Dendritic cell treated with granulocyte-macrophage colony-stimulating factor and Interleukin-4, amounts not matched to agents 40 ng/mL and 50 ng/mL, for 4 days (primary cell): ENCODE measurements at regions of chr4 and their contacts with region 1.

Region 1: DNA sequence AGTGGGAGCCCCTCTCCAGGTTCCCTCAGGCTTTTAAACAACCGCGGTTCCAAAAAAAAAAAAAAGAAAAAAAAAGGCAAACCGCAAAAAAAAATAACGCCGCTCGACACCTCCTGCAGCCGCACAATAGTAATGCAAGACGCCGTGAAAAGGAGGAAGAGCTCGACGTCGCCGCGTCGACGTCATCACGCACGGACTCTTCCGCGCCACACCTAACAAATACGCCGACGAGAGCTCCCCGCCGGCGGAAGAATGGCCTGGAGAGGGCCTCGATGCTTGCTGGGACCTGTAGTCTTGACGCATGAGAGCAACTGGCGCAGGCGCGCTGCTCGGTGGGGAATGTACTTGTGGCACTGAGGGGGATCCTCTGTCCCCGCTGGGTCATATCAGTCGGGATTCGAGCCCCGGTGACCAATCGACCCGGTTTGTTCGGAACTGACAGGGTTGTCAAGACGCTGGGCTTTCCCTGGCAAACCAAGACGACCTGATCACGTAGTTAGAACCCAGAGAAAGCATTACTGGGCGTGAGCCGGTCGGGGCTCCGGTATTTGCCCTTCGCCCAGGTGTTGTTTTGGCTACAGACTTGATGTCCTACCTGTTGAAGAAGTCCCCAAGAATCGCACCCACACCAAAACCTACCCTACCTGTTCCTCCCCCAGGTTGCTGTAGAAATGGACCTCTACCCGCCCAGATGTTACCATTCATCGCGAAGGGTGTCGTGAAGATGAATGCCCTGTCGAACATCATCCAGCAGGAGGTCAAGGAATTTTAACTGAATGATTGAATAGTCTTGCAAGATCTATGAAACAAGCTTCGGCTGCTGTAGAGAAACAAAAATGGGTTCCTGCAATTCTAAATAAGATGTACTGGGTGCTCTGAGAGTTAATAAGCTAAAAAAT is at the start of gene CBR4:
- H3K4me3 Mint-ChIP-seq: peak within 1 kb of the TSS; percentile 90
- H3K27ac Mint-ChIP-seq: peak within 1 kb of the TSS; percentile 96
- H3K4me1 Mint-ChIP-seq: peaks cover 19% of the 10 kb centered on the region
- H3K27me3 Mint-ChIP-seq: no peaks in the 10 kb centered on the region

Region 2: GRCh38 chr4:169079942-169080827 is 69.8 kb after region 1 on chr4:
- intact Hi-C with region 1: loop called (anchors 2 kb)
- H3K4me3 Mint-ChIP-seq: peak overlapping the region; percentile 64
- H3K27ac Mint-ChIP-seq: peak overlapping the region; percentile 90
- H3K4me1 Mint-ChIP-seq: peaks cover 33% of the 10 kb centered on the region
- H3K27me3 Mint-ChIP-seq: no peaks in the 10 kb centered on the region

Region 3: GRCh38 chr4:169147191-169147590 is 136.8 kb after region 1 on chr4:
- intact Hi-C with region 1: no loop called
- H3K4me3 Mint-ChIP-seq: no peak overlapping the region
- H3K27ac Mint-ChIP-seq: no peak overlapping the region
- H3K4me1 Mint-ChIP-seq: no peaks in the 10 kb centered on the region
- H3K27me3 Mint-ChIP-seq: no peaks in the 10 kb centered on the region

Region 4: DNA sequence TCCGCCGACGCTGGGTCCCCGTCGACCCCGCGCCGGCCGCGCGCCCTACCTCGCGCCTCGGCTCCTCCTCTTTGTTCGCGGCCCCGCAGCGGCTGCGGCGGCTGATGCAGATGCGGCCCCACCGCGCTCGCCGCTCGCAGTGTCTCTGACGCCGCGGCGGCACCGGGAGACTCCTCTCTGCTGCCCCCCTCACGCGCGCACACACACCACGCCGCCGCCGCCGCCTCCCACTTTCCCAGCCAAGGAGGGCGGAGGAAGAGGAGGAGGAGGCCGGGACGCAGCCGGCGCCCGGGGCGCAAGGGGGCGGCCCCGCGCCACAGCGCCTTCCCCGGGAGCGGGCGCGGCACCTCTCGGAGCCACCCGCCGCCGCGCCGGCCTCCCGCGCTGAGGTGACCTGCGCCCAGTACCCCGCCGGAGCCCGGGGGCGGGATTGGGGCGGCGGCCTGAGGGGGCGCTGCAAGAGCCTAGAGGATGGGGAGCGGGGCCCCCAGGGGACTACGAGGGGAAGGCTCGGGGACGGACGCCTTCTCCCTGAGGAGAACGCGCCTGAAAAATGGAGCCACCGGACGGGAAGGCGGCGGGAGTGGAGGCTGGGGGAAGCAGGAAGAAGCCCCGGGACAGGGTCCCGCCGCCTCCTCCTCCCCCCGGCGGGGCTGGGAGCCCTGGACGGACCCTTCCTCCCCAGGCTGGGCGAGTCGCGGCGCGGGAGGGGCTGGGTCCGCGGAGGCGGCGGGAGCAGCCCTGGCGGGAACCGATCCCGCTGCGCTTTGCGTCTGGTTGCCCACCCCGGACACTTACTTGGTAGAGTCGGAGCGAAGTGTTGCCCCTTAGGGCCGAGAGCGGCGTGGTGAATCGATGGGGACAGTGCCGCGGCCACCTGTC is 260.7 kb after region 1 on chr4 and contains the start of gene SH3RF1:
- intact Hi-C with region 1: loop called (anchors 10 kb)
- H3K4me3 Mint-ChIP-seq: peak within 1 kb of the TSS; percentile 84
- H3K27ac Mint-ChIP-seq: peak within 1 kb of the TSS; percentile 63
- H3K4me1 Mint-ChIP-seq: peaks cover 31% of the 10 kb centered on the region
- H3K27me3 Mint-ChIP-seq: peaks cover 15% of the 10 kb centered on the region